Calu3 (cell line): ENCODE measurements at regions of chr2 and their contacts with region 1.

Region 1: DNA sequence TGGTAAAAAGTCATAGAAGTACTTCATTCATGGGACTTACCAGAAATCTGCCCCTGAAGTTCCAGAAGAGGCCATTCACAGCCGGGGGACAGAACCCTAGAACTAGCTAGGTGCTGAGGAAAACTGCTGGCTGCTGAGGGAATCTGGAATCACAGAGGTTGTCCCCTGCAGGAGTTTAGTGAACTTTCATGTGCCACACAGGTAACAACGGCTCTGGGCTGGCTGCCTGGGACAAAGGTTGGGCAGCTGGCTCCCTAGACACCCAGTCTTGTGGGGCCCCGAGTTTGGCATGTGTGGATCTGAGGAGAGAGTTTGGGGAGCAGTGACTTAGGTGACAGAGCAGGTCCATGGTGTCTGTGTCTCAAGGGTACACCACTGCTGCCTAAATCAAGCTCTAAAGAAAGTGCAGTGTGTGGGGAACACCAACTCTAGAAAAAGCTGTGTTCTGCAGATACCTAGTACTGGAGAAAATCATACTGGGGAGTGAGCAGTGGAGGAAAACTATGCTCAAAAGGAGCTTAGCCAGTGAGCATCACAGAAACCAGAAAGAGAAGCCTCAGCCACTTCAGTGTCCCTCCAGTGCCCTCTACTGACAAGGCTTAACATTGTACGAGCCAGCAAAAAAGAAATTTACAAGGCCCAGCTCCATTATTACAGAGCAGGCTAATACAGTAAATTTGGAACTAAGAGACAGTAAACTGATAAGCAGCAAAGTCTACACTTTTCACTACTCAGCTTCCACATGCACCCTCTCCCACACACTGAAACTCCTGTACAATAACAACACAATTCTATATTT is 15.2 kb downstream of the GALNT3 start:
- DNase-seq: peak; percentile 43
- H3K4me3 Mint-ChIP-seq: no peak overlapping the region
- H3K27ac Mint-ChIP-seq: no peak overlapping the region
- H3K4me1 Mint-ChIP-seq: peaks cover 23% of the 10 kb centered on the region
- H3K27me3 Mint-ChIP-seq: no peaks in the 10 kb centered on the region
- CTCF ChIP-seq: peak; percentile 38

Region 2: GRCh38 chr2:165573534-165574461 is 205.1 kb before region 1 on chr2:
- CTCF ChIA-PET with region 1: no interaction called
- intact Hi-C with region 1: loop called (anchors 10 kb)
- DNase-seq: peak; percentile 44
- H3K4me3 Mint-ChIP-seq: peak overlapping the region; percentile 90
- H3K27ac Mint-ChIP-seq: peak overlapping the region; percentile 66
- H3K4me1 Mint-ChIP-seq: no peaks in the 10 kb centered on the region
- H3K27me3 Mint-ChIP-seq: no peaks in the 10 kb centered on the region
- CTCF ChIP-seq: no peak

Region 3: DNA sequence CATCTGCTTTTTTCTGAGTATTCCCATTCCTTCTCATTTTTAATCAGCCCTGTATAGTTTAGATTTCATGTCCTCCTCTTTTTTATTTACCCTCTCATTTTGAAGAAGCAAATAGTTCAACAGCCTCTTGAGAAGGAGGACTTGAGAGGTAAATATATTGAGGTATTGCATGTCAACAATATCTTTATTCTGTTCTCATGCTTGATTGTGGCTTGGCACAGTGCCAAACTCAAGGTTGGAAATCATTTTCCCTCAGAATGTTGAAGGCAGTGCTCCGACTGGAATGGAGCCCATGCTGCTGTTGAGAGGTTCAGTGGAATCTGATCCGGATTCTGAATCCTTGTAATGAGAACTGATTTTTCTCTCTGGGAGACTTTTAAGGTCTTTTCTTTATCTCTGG is 46.2 kb after region 1 on chr2:
- CTCF ChIA-PET with region 1: no interaction called
- intact Hi-C with region 1: no loop called
- DNase-seq: peak; percentile 31
- H3K4me3 Mint-ChIP-seq: no peak overlapping the region
- H3K27ac Mint-ChIP-seq: no peak overlapping the region
- H3K4me1 Mint-ChIP-seq: peaks cover 14% of the 10 kb centered on the region
- H3K27me3 Mint-ChIP-seq: no peaks in the 10 kb centered on the region
- CTCF ChIP-seq: no peak